ENCODE measurements at regions of chr18 and their contacts with region 1.

Region 1: DNA sequence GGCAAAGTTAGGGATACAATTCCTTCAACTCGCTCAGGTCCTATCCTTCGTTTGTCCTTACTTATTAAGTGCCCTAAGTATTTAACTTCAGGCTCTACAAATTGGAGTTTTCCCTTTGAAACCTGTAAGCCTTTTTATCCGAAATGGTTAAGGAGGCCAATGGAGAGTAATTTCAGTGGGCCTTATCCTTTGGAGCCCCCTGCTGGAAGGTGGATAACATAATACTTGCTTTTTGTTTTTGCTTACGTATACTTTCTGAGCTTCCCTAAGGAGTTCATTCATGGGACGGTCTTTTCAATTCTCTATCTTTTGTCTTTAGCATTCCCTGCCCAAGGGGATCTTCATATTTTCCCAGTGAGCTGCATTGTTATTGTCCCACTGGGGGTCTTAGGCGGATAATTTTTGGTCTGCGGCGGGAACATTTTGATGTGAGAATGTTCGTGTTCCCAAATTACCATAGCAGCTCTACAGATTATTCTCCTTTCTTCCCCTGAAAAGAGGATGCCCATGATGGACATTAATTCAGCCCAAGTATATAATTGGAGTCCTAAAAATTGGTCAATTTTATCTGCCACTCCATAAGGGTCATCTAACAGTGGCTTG is 34.4 kb upstream of the TRAPPC8 start:
- DNase-seq: no peak
- H3K4me3 ChIP-seq: no peak overlapping the region
- H3K27ac ChIP-seq: no peak overlapping the region
- H3K4me1 ChIP-seq: no peaks in the 10 kb centered on the region
- H3K27me3 ChIP-seq: no peaks in the 10 kb centered on the region
- CTCF ChIP-seq: peak; percentile 49 to 57

Region 2: DNA sequence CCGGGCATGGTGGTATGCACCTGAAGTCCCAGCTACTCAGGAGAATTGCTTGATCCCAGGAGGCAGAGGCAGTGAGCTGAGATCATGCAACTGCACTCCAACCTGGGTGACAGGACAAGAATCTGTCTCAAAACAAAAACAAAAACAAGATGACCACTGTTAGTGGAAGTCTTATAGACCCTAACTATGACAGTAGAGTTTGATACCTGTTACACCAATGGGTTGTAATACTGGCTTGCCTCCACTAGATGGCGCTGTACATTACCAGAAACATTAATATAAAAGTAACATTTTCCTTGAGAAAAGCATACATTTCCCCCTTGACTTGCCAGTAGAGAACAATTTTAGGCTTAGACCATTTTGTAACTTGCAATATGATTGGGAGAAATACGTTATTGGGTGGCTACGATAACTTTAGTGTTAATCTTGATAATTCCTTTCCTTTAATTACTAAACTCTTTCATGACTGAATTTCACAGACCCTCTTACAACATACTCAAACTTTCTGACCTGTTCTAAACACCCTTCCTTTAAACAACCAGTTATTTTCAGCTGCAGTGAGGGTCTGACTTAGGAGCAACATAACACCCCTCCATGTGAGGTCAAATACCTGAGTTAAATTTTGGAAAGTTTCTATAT is 236.2 kb before region 1 on chr18:
- intact Hi-C with region 1: loop called (anchors 5 kb)
- DNase-seq: peak in 1 of 2 donors; percentile 65
- H3K4me3 ChIP-seq: no peak overlapping the region
- H3K27ac ChIP-seq: no peak overlapping the region
- H3K4me1 ChIP-seq: no peaks in the 10 kb centered on the region
- H3K27me3 ChIP-seq: no peaks in the 10 kb centered on the region
- CTCF ChIP-seq: peak; percentile 72 to 83

Region 3: DNA sequence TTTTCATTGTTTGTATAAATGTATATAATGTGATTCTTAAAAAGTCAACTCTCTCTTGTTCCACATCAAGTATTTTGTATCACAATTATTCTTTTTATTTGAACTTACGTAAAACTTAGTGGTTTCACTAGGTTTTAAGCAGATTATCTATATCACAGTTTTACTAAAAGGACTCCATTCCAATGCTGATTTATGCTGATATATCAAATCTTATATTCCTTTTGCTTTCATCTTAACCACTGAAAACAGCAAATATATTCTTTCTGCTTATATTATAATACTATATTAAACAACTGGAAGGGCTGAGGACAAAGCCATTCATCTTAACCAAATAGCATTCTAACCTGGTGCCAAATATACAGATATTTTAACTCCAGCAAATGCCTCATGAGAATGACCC is 58.6 kb before region 1 on chr18:
- intact Hi-C with region 1: no loop called
- DNase-seq: no peak
- H3K4me3 ChIP-seq: no peak overlapping the region
- H3K27ac ChIP-seq: no peak overlapping the region
- H3K4me1 ChIP-seq: no peaks in the 10 kb centered on the region
- H3K27me3 ChIP-seq: no peaks in the 10 kb centered on the region
- CTCF ChIP-seq: no peak

Measured in tibial artery (tissue), 4 donors.